K562 (cell line): ENCODE measurements at regions of chr3 and their contacts with region 1.

Region 1: DNA sequence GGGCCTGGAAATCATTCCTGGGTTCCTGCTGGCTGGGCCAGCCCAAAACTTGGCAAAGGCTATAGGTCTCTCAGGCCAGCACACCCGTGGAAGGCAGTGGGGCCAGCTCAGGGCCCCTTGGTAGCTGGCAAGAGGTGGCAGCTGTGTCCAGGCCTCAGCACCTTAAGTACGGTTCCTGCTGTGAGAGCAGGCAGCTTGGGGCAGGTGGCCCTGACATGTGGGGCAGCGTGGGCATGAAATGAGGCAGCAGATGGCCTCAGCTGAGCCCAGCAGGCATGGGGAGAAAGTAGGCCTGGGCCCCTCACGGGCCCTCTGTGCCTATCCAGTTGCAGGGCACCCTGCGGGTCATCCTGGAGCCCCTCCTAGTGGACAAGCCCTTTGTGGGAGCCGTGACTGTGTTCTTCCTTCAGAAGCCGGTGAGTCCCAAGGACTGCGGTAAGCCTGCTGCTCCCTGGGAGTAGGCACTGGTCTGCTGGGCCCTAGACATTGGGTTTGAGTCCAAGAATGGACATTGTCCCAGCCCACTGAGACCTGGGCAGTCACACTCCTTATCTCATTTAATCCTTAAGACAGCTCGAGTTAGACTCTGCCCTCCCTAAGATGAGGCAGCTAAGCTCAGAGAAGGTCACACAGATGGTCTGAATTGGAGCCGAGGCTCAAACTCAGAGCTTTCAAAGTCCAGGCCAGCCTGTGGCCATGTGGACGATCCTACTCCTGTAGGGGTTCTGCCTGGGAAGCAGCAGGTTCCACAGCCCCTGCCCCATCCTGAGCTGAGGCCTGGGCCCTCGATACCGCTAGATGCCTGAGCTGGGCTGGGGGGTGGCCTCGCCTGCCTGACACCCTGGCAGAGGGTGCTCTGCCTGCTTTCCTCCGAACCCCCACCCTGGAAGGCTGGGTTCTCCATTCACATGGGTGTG is 25.5 kb downstream of the ESYT3 start:
- DNase-seq: no peak
- ATAC-seq: peak; percentile 67
- H3K4me3 ChIP-seq: no peak overlapping the region
- H3K27ac ChIP-seq: no peak overlapping the region
- H3K4me1 ChIP-seq: peaks cover 0 to 4% of the 10 kb centered on the region in 2 experiments; a peak in 2 of 5 replicates
- H3K27me3 ChIP-seq: peaks cover 0 to 48% of the 10 kb centered on the region in 2 experiments; a peak in 3 of 5 replicates
- CTCF ChIP-seq: peak; percentile 15 to 34 (median 25); a peak in 1 of 6 replicates
- EP300 ChIP-seq: no peak
- POLR2A ChIP-seq: no peak
- RAD21 ChIP-seq: peak in 1 of 2 experiments; percentile 49; a peak in 2 of 4 replicates

Region 2: DNA sequence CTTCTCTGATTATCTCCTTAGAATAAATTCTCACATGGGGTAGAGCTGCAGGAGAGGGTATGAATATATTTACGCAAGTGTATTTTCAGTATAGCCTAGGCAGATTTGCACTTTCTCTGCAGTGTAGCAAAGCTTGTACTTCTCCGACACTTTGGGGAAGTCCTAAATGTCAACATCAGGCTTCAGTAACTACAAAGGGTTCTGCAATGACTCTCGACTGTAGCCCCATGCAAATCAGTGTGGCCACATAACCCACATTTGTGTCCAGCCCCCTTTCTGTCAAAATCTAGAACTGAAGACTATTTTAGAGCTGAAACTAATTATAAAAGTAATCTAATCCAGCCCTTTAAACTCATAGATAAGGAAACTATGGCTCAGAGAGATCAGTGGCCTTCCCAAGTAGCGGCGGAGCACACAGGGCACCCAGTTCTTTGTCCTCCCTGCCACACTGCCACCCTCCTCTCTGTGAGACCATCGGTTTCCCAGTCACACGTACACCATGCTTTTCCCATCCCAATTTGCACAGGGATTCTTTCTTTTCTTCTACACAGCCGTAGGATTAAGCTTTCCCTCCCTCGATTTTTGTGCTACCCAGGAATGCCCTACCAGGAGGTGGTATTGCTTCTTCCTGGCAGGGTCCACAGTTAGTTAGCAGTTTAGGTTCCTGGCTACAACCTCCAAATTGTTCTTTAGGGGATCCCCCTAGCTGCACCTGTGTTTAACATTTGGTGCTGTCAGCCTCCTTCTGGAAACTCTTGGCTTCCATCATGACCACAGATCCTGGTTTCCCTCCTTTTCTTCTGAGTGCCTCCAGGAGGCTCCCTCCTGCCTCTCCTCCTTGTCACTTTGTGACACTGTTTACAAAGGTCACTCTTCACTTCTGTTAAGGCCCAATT is 88.6 kb before region 1 on chr3:
- CTCF ChIA-PET with region 1: no interaction called
- POLR2A ChIA-PET with region 1: no interaction called
- in situ Hi-C with region 1: no loop called
- intact Hi-C with region 1: no loop called
- DNase-seq: no peak
- ATAC-seq: no peak
- H3K4me3 ChIP-seq: no peak overlapping the region
- H3K27ac ChIP-seq: no peak overlapping the region
- H3K4me1 ChIP-seq: no peaks in the 10 kb centered on the region; a peak in 2 of 5 replicates
- H3K27me3 ChIP-seq: peaks cover 0 to 24% of the 10 kb centered on the region in 2 experiments; a peak in 2 of 5 replicates
- CTCF ChIP-seq: no peak
- EP300 ChIP-seq: no peak
- POLR2A ChIP-seq: no peak
- RAD21 ChIP-seq: 0 out of 4 replicates have a peak, but pooled peaks of 1 of the 2 experiments have one; percentile 8

Region 3: GRCh38 chr3:138417559-138417982 is 42.3 kb before region 1 on chr3:
- CTCF ChIA-PET with region 1: no interaction called
- POLR2A ChIA-PET with region 1: no interaction called
- in situ Hi-C with region 1: no loop called
- intact Hi-C with region 1: loop called (anchors 5 kb)
- DNase-seq: peak; percentile 67 to 79 (median 70)
- ATAC-seq: peak; percentile 98
- H3K4me3 ChIP-seq: no peak overlapping the region
- H3K27ac ChIP-seq: no peak overlapping the region
- H3K4me1 ChIP-seq: no peaks in the 10 kb centered on the region; a peak in 1 of 5 replicates
- H3K27me3 ChIP-seq: no peaks in the 10 kb centered on the region
- CTCF ChIP-seq: peak; percentile 87 to 96 (median 88)
- EP300 ChIP-seq: no peak
- POLR2A ChIP-seq: no peak
- RAD21 ChIP-seq: peak; percentile 72 to 88